Activated T-helper 1 cell treated with anti-CD3 and anti-CD28 coated beads, Interleukin-12 subunit alpha, Interleukin-12 subunit beta, Interleukin-2, Interleukin-4 antibody, amounts not matched to agents 30 ng/mL and 10 ng/mL and 1 ng/mL, durations not matched to agents 14 hours and 24 hours and 36 hours (primary cell): ENCODE measurements at regions of chr9 and their contacts with region 1.

Region 1: DNA sequence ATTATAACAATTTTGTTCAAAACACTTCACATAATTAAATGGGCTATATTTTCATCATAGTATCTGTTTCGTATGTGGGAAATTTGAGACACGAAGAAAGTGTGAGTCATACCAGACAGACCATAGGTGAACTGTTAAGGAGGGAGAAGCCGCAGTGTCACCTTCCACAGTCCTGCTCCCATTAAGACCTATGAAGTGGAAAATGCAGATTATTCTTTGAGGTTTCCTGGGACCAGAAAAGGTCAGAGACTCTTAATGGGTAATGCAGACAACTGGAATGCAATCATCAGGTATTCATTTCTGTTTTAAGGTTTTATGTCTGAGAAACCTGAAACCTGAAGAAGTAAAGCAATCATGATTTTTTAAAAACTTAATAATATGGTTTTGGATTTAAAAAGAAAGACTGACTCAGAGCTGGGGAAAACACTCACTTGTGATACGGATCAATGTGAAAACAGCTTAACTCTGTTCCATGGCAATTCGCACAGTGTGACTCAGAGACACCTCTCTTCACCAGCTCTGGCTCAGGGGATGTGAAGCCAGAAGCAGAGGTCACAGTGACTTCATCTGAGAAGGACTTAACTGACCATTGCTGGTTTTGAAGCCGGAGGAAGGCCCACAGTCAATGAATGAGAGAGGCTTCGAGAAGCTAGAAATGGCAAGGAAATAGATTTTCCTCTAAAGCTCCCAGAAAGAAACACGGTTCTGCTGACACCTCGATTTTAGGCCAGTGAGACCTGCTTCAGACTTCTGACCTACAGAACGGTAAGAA is 17.2 kb upstream of the GCNT1 start:
- DNase-seq: no peak
- H3K4me3 Mint-ChIP-seq: peak overlapping the region; percentile 89
- H3K27ac Mint-ChIP-seq: peak overlapping the region; percentile 98
- H3K4me1 Mint-ChIP-seq: peaks cover 68% of the 10 kb centered on the region
- H3K27me3 Mint-ChIP-seq: no peaks in the 10 kb centered on the region

Region 2: GRCh38 chr9:76023715-76024195 is 418.0 kb before region 1 on chr9:
- intact Hi-C with region 1: loop called (anchors 5 kb)
- DNase-seq: peak; percentile 35
- H3K4me3 Mint-ChIP-seq: peak overlapping the region; percentile 75
- H3K27ac Mint-ChIP-seq: peak overlapping the region; percentile 77
- H3K4me1 Mint-ChIP-seq: peaks cover 87% of the 10 kb centered on the region
- H3K27me3 Mint-ChIP-seq: no peaks in the 10 kb centered on the region

Region 3: GRCh38 chr9:76403352-76403751 is 38.4 kb before region 1 on chr9:
- intact Hi-C with region 1: loop called (anchors 1 kb)
- DNase-seq: peak; percentile 12
- H3K4me3 Mint-ChIP-seq: peak overlapping the region; percentile 25
- H3K27ac Mint-ChIP-seq: peak overlapping the region; percentile 32
- H3K4me1 Mint-ChIP-seq: peaks cover 23% of the 10 kb centered on the region
- H3K27me3 Mint-ChIP-seq: no peaks in the 10 kb centered on the region

Region 4: GRCh38 chr9:76475686-76476085 is 33.9 kb after region 1 on chr9:
- intact Hi-C with region 1: no loop called
- DNase-seq: no peak
- H3K4me3 Mint-ChIP-seq: no peak overlapping the region
- H3K27ac Mint-ChIP-seq: no peak overlapping the region
- H3K4me1 Mint-ChIP-seq: peaks cover 5% of the 10 kb centered on the region
- H3K27me3 Mint-ChIP-seq: no peaks in the 10 kb centered on the region

Region 5: DNA sequence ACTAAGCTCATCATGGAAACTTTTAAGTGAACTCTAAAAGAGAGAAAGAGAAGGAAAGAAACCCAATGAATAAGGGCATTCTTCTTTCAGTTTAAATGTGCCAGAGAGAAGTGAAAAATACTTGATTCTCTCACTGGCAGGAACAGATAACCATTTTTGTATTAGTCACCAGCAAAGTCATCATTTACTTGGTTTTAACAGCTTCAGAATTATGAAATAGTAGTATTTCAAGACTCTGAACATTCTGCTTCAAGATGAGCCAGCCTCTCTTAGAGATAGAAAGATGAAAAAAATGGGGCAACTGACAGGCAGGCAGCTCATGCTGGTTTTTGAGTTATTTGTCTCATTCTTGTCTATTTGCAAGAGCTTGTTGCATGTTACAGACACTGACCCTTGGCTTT is 120.8 kb after region 1 on chr9:
- intact Hi-C with region 1: loop called (anchors 2 kb)
- DNase-seq: no peak
- H3K4me3 Mint-ChIP-seq: no peak overlapping the region
- H3K27ac Mint-ChIP-seq: peak overlapping the region; percentile 67
- H3K4me1 Mint-ChIP-seq: peaks cover 5% of the 10 kb centered on the region
- H3K27me3 Mint-ChIP-seq: peaks cover 5% of the 10 kb centered on the region

Region 6: DNA sequence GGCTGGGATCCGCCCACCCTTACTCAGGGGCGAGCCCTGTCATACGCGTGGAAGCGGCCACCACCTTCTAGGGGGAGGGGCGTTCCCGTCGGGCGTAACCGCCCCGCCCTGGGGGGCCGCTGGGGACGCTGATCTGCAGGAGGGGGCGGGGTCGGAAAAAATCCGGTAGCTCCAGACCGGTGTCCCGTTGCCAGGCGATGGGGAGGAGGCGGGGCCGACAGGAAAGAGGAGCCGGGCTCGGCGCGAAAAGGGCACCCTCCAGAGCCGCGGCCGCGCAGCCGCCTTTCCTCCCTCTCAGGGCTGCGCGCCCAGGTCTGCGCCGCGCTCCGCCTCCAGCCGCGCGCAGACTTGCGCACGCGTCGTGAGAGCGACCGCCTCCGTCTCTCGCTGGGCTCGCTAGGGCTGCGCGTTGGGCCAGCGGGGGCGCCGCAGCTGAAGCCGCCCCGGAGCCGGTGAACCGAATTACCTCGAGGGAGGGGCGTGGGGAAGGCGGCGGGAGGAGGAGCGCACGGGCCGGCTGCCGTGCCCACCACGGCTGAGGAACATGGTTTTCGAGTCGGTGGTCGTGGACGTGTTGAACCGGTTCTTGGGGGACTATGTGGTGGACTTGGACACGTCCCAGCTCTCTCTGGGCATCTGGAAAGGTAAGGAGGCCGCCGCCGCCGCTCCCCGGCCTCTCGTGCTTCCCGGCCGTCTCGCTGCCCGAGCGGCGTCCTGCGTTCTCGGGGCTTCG is 735.6 kb after region 1 on chr9 and contains the start of gene VPS13A:
- intact Hi-C with region 1: loop called (anchors 5 kb)
- DNase-seq: peak; percentile 88
- H3K4me3 Mint-ChIP-seq: peak within 1 kb of the TSS; percentile 95
- H3K27ac Mint-ChIP-seq: peak within 1 kb of the TSS; percentile 92
- H3K4me1 Mint-ChIP-seq: peaks cover 32% of the 10 kb centered on the region
- H3K27me3 Mint-ChIP-seq: peaks cover 13% of the 10 kb centered on the region
- total RNA-seq, gene VPS13A: 43.7 and 44.2 TPM in 2 replicates